ENCODE measurements at regions of chrX and their contacts with region 1.

Region 1: DNA sequence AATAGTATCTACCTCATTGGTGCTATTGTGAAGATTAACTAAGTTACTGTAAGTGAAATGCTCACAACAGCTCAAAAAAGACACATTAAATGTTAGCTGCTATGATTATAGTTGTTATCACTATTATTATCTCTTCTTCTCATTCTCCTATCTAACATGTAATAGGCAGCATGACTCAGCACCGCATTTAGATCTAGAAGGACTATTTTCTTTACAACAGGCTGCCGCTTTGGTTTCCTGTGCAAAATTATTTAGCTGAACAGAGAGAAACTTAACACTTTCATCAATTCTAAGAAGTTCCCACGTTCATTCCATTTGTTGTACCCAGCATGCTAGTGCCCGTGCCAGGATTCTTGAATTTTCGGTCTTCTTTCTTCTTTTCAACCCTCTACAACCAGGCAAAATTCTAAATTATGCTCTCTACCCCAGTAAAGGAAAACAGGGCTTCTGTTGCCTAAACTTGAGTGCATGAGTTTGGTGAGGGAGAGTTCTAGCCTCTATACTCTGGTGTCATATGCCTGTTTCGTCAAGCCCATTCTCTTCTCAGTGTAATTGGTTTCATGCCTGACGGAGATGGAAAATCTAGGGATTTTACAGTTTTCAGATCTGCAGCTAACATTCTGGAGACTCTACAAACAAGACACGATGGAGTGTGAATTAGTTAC is 378.9 kb downstream of the PPP1R2C start:
- DNase-seq: peak in 1 of 4 donors; percentile 1
- ATAC-seq: no peak
- H3K4me3 ChIP-seq: no peak overlapping the region
- H3K27ac ChIP-seq: no peak overlapping the region
- H3K4me1 ChIP-seq: no peaks in the 10 kb centered on the region
- H3K27me3 ChIP-seq: no peaks in the 10 kb centered on the region
- CTCF ChIP-seq: no peak
- POLR2A ChIP-seq: no peak

Region 2: GRCh38 chrX:41313419-41313818 is 1085.7 kb before region 1 on chrX:
- intact Hi-C with region 1: no loop called
- DNase-seq: no peak
- ATAC-seq: no peak
- H3K4me3 ChIP-seq: no peak overlapping the region
- H3K27ac ChIP-seq: no peak overlapping the region
- H3K4me1 ChIP-seq: no peaks in the 10 kb centered on the region
- H3K27me3 ChIP-seq: no peaks in the 10 kb centered on the region
- CTCF ChIP-seq: no peak
- POLR2A ChIP-seq: no peak

Region 3: DNA sequence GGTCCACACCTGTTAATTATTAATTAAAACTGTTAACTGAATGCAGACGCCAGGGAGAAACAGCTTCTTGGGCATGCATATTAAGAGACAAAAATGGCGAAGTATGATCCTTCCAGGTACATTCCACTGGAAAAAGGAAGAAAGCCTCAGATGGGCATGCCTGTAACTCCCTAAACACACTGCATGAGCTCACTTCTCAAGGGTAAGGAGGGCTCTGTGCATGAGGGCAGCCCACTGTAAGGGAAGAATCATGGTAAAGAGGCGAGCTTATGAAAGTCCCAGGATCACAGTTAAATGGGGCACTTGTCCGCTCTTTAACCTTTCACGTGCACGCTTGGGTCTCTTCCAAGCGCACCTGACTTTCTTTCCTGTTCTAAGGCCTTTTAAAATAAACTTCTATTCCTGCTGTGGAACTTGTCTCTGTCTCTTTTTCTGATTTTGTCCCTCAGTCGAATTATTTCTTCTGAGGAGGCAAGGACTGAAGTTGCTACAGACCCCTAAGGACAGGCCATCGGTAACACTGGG is 57.1 kb after region 1 on chrX:
- intact Hi-C with region 1: loop called (anchors 10 kb)
- DNase-seq: no peak
- ATAC-seq: no peak
- H3K4me3 ChIP-seq: no peak overlapping the region
- H3K27ac ChIP-seq: no peak overlapping the region
- H3K4me1 ChIP-seq: no peaks in the 10 kb centered on the region
- H3K27me3 ChIP-seq: no peaks in the 10 kb centered on the region
- CTCF ChIP-seq: no peak
- POLR2A ChIP-seq: no peak